Gastrocnemius medialis (tissue), 4 donors: ENCODE measurements at regions of chr7 and their contacts with region 1.

Region 1: DNA sequence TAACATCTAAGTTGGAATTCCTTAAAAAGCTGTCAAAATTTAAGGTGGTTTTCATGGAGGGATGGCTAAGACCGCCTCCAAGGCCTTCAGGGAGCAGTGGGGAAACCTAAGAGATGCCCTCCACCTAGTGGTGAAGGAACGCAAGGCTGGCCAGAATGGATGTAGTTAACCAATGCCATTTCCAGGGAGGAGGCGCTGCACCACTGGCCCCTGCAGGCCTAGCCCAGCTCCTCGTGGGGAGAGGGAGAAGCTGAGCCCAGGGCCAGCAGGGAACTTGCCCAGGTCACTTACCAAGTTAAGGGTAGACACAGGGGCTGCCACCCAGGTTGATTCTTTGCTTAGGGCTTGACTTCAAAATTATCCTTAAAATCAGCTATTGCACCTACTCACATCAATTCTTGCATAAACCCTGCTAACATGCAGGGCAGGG is 32.0 kb downstream of the FIGNL1 start:
- DNase-seq: peak; percentile 14 to 39
- ATAC-seq: peak; percentile 44 to 54
- H3K4me3 ChIP-seq: no peak overlapping the region
- H3K27ac ChIP-seq: no peak overlapping the region
- H3K4me1 ChIP-seq: no peaks in the 10 kb centered on the region
- H3K27me3 ChIP-seq: no peaks in the 10 kb centered on the region
- CTCF ChIP-seq: peak in 3 of 5 experiments; percentile 41 to 63 (median 55)
- POLR2A ChIP-seq: no peak

Region 2: DNA sequence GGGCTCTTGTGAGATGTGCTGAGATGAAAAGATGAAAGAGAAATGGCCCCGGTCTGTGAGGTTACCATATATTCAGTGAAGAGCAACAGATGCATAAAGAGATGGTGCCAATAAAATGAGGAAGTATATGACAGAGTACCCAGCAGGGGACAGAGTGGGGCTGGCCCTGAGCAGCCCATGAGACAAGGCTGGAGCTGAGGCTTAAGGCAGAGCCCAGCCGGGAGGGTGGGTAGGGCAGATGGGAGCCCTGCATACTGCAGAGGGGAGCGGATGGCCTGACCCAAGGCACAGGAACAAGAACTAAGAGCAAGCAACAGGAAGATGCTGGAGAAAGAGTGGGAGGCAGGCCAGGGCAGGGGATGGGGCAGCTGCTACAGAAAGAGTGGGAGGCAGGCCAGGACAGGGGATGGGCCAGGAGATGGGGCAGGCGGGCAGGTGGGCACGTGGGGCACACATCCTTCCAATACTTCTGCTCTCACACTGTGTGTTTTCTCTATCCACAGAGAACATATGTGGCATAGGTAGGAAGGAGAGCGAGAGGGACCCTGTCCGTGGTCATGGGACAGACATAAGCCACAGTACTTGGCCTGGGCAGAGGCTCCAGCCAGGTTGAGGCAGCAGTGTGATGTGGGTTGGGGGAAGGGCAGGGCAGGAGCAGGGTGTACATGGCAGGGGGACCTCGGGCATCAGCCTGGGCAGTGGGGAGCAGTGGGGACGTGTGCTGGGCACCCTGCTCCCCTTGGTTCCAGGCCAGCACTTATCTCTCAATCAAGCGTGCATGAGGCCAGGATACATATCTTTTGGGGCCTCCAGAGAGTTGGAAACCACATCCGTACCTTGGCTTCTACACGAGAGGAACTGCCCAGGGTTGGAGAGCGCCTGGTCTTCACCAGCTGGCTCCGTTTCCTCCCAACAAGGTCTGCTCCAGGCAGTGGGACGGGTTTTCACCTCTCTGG is 205.2 kb before region 1 on chr7:
- in situ Hi-C with region 1: loop called in 2 of 4 experiments (anchors 10 to 25 kb)
- intact Hi-C with region 1: loop called (anchors 10 kb)
- DNase-seq: no peak
- ATAC-seq: no peak
- H3K4me3 ChIP-seq: no peak overlapping the region
- H3K27ac ChIP-seq: no peak overlapping the region
- H3K4me1 ChIP-seq: no peaks in the 10 kb centered on the region
- H3K27me3 ChIP-seq: no peaks in the 10 kb centered on the region
- CTCF ChIP-seq: no peak
- POLR2A ChIP-seq: no peak